ENCODE measurements at regions of chr17 and their contacts with region 1.

Region 1: GRCh38 chr17:52170963-52171572 is 12.6 kb upstream of the CA10 start:
- DNase-seq: peak; percentile 59
- H3K4me3 ChIP-seq: 0 out of 4 replicates have a peak overlapping the region, but pooled peaks of 1 of the 2 experiments have one; percentile 12
- H3K27ac ChIP-seq: no peak overlapping the region
- H3K4me1 ChIP-seq: no peaks in the 10 kb centered on the region
- H3K27me3 ChIP-seq: no peaks in the 10 kb centered on the region
- CTCF ChIP-seq: peak; percentile 67
- EP300 ChIP-seq: no peak
- RAD21 ChIP-seq: peak; percentile 87

Region 2: DNA sequence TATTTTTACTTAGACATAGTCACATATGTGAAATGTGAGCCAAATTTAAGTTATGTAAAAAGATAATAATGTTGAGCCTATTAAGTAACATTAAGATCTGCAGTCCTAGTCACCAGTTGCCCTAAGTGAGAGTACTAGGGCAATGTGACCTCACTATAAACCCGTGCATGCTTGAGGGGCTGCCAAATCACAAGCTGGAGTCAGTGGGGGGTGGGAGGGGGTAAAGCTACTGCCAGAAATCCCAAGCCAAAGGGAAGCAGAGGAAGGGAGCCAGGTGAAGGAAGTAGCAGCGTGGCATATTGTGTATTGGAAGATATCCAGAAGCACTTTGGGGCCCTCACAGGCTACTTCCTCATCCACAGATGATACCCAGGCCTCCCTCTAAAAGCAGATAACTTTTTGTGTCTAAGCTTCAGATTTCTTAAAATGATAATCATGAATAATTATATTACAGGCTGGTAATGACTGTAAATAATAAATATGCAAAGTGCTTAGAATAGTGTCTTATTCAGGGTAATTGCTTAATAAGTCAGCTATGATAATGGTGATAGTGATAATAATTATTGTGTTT is 146.7 kb before region 1 on chr17:
- CTCF ChIA-PET with region 1: no interaction called
- POLR2A ChIA-PET with region 1: no interaction called
- DNase-seq: peak; percentile 6
- H3K4me3 ChIP-seq: no peak overlapping the region
- H3K27ac ChIP-seq: peak overlapping the region in 1 of 2 experiments; percentile 44; a peak in 2 of 4 replicates
- H3K4me1 ChIP-seq: peaks cover 13 to 17% of the 10 kb centered on the region in 2 experiments; a peak in 3 of 4 replicates
- H3K27me3 ChIP-seq: no peaks in the 10 kb centered on the region
- CTCF ChIP-seq: no peak
- EP300 ChIP-seq: peak in 1 of 2 experiments; percentile 85; a peak in 2 of 4 replicates
- RAD21 ChIP-seq: peak; percentile 9; the same call in 1 of the 2 replicates

Region 3: DNA sequence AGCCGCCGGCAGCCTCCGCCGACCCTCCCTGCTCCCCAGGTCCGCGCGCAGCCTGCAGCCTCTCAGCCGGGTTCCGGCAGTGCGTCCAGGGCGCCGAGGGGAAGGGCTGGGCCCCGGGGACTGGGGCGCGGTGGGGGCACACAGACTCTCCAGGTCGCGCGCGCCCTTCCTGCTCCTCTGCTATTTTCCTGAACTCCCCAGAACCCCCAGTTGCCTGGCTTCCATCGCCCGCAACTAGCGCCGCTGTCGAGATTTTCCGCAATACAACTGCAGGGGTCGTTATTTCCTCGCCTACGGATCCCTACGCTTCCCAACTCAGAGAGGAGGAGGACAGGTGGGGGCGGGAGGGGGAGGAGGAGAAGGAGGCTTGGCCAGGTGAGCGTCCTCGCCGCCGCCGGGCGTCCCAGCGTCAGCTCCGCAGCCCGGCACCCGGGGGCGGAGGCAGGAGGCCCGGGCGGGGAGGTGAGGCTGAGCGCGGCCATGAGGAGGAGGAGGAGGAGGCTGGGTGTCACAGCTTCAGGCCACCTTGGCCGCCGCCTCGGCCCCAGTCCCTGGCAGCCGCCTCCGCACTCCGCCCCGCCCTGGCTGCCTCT is 12.5 kb before region 1 on chr17 and contains the start of gene CA10:
- CTCF ChIA-PET with region 1: interaction called, 39 read pairs
- POLR2A ChIA-PET with region 1: no interaction called
- DNase-seq: peak; percentile 80
- H3K4me3 ChIP-seq: peak within 1 kb of the TSS in 1 of 2 experiments; percentile 42; a peak in 2 of 4 replicates
- H3K27ac ChIP-seq: no peak within 1 kb of the TSS
- H3K4me1 ChIP-seq: peaks cover 0 to 17% of the 10 kb centered on the region in 2 experiments; a peak in 1 of 4 replicates
- H3K27me3 ChIP-seq: peaks cover 28% of the 10 kb centered on the region
- CTCF ChIP-seq: no peak
- EP300 ChIP-seq: no peak
- RAD21 ChIP-seq: peak; percentile 62
- polyA plus RNA-seq, gene CA10: not detected in 2 replicates

Region 4: GRCh38 chr17:52297230-52298010 is 126.4 kb after region 1 on chr17:
- CTCF ChIA-PET with region 1: interaction called, 15 read pairs
- POLR2A ChIA-PET with region 1: no interaction called
- DNase-seq: peak; percentile 26
- H3K4me3 ChIP-seq: no peak overlapping the region
- H3K27ac ChIP-seq: no peak overlapping the region
- H3K4me1 ChIP-seq: peaks cover 0 to 3% of the 10 kb centered on the region in 2 experiments; a peak in 1 of 4 replicates
- H3K27me3 ChIP-seq: no peaks in the 10 kb centered on the region
- CTCF ChIP-seq: peak; percentile 20
- EP300 ChIP-seq: no peak; a peak in 1 of 4 replicates
- RAD21 ChIP-seq: peak; percentile 55